ENCODE measurements at regions of chr7 and their contacts with region 1.

Region 1: DNA sequence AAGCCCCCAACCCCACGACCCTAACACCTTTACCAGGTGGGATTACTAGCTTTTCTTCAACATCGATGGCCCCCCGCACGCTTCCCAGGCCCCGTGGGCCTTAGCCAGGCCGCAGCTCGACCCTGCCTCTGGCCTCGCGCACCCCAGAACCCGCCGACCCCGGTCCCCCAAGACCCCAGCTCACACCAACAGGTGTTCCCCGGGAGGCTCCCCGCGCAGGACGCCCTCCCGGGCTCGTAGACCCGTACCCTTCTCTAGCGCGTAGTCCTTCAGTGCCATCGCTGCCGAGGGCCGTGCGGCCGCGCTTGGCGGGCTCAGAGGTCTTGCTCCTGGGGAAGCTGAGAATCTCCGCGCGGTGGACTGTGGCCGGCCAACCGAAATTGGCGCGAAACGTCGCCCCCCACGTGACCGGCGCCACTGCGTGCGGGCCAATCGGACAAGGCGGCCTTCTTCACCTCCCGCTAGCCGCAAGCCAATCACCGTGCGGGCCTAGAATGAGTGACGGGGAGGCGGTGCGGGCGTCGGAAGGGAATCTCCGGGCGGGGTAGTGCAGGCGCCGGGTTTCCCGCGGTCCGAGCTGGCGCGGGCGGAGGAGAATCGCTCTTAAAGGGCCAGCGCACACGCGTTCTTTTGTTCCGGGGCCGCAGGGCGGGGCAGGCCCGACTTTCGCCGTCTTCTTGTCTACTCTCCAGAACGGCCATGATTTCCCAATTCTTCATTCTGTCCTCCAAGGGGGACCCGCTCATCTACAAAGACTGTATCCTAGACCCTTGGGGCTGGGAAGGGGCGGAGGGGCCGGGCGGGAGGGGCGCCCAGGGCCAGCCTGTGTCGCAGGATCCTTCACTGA is at the starts of genes AP4M1 and MCM7:
- DNase-seq: peak; percentile 98 to 100 (median 100)
- H3K4me3 ChIP-seq: peak within 1 kb of the TSS; percentile 61 to 99 (median 83)
- H3K27ac ChIP-seq: peak within 1 kb of the TSS; percentile 73 to 98 (median 94)
- H3K27me3 ChIP-seq: no peaks in the 10 kb centered on the region
- CTCF ChIP-seq: peak in 8 of 56 donors; percentile 9 to 45 (median 16)
- total RNA-seq, gene AP4M1: 11.3 to 28.4 (median 19.5) TPM
- total RNA-seq, gene MCM7: 19.4 to 81.4 (median 38.0) TPM

Region 2: DNA sequence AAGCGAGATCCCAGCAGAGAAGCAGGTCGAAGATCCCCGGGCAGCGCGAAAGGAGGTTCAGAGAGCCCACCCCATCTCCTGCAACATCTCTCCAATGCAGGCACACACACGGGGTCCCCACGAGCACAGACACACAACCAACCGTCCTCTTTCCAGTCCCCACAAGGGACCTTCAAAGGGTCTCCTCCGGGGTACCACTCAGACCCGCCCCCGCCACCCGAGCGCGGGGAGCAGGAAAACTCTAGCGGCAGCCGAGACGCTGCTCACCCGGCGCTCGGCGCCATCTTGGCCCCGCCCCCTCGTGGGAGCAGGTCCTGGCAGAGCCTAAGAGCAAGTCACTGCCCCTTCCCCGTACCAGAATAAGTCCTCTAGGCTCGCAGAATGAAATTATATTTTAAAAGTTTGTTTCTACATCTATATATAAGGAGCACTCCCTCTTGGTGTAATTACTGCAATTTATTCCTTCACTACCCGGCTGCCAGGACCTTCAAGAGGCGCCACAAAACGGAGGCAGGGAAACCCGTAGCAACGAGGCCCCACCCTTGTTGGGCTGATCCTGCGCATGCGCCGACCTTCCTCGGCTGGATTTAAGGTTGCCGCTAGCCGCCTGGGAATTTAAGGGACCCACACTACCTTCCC is 17.9 kb after region 1 on chr7 and contains the starts of genes CNPY4 and TAF6:
- intact Hi-C with region 1: loop called in 1 of 2 experiments (anchors 1 kb)
- DNase-seq: peak; percentile 93 to 97 (median 95)
- H3K4me3 ChIP-seq: peak within 1 kb of the TSS; percentile 60 to 99 (median 86)
- H3K27ac ChIP-seq: peak within 1 kb of the TSS; percentile 85 to 100 (median 97)
- H3K27me3 ChIP-seq: no peaks in the 10 kb centered on the region
- CTCF ChIP-seq: peak in 27 of 56 donors; percentile 6 to 54 (median 22)
- total RNA-seq, gene CNPY4: 9.7 to 27.8 (median 16.8) TPM
- total RNA-seq, gene TAF6: 46.6 to 98.0 (median 72.6) TPM

Region 3: DNA sequence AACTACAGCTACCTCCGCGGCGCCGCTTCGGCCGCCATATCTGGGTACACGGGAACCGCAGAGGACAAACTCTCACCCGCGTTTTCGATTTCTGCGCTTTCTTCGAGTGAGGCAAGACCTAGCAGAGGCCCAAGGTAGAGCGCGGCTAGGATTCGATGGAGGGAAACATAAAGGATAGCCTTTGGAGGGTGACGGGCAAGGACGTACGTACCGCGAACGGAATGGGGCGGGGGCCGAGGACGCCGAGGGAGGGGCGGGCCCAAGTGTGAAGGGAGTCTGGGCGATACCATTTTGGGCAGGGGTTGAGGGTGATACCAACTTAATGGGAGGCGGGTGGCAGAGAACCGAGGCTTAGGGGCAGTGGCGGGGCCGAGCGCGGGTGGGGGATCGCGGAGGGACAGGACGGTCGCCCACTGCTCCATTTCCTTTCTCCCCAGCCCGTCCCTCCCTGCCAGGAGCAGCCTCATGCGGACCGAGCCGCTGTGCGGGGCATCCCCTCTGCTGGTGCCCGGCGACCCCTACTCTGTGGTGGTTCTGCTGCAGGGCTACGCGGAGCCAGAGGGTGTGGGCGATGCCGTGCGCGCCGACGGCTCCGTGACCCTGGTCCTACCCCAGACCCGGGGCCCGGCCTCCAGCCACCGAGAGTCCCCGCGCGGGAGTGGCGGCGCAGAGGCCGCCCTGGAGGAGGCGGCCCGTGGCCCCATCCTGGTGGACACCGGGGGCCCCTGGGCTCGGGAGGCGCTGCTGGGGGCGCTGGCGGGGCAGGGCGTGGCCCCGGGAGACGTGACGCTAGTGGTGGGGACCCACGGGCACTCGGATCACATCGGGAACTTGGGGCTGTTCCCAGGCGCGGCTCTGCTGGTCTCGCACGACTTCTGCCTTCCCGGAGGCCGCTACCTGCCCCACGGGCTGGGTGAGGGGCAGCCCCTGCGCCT is 26.0 kb after region 1 on chr7 and contains the start of gene MBLAC1:
- intact Hi-C with region 1: loop called (anchors 2 kb)
- DNase-seq: peak; percentile 78 to 94 (median 90)
- H3K4me3 ChIP-seq: peak within 1 kb of the TSS; percentile 64 to 98 (median 93)
- H3K27ac ChIP-seq: peak within 1 kb of the TSS; percentile 55 to 99 (median 95)
- H3K27me3 ChIP-seq: no peaks in the 10 kb centered on the region
- CTCF ChIP-seq: peak in 9 of 56 donors; percentile 1 to 27 (median 9)
- total RNA-seq, gene MBLAC1: 5.6 to 16.5 (median 11.0) TPM

Region 4: DNA sequence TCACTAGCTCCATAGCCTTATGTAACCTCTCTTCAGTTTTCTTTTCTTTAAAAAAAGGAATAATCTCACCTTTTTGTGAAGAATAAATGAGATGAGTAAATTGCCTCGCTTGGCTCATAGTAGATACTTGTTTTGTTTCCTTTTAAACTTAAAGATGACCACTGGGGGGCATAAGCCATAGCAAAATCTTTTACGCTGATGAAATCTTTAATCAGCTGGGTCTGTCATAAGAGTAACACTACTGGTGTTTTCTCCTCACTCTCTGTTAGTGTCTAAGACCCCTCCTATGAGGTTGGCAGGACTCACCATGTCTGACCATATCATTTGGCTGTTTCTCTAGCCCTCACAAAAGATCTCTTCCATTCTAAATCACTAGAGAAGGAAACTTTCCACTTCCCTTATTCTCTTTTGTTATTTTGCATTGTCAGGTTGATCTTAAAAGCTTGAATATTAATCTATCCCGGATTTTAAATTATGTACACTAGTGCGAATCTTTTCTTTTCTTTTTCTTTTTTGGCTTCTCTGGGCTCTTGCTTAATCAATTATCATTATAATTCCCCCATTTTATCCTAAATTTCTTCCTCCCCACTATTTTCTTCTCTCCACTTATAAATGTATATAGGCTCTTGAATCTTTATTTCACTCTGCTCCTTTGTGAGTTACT is 88.9 kb after region 1 on chr7:
- intact Hi-C with region 1: no loop called
- DNase-seq: no peak
- H3K4me3 ChIP-seq: no peak overlapping the region
- H3K27ac ChIP-seq: no peak overlapping the region
- H3K27me3 ChIP-seq: no peaks in the 10 kb centered on the region
- CTCF ChIP-seq: peak in 50 of 56 donors; percentile 15 to 66 (median 43)

Region 5: DNA sequence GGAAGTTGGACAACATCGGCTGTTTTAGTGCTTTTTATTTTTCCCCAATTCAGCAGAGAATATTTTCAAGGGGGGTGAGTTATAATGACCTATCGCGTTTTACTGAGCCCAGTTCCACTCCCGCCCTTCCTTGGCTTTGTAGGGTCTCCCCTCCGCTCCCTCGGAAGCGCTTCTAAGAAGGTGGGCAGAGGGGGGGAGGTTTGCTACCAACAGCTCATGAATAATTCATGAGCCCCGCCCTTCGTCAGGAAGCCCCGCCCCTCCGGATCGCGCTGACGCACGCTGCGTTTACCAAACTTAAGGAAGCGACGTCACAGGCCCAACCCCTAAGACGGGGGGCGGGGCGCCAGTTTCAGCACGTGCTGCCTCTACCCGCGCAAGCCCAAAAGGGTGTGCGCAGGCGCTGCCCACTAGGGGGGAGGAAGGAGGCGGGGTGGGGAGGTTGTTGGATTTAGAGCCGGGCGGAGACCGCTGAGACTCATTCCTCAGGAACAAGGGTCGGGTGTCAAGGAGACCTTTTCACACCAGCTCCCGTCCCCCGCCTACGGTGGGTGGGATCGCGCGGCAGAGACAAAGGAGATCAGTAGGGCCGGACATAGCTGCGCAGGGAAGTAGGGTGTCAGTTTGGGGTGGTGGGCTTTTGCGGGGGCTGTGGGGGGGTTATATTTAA is 327.9 kb after region 1 on chr7:
- intact Hi-C with region 1: loop called in 1 of 2 experiments (anchors 10 kb)
- DNase-seq: peak; percentile 99 to 100 (median 100)
- H3K4me3 ChIP-seq: peak overlapping the region; percentile 67 to 99 (median 88)
- H3K27ac ChIP-seq: peak overlapping the region; percentile 98 to 100 (median 100)
- H3K27me3 ChIP-seq: no peaks in the 10 kb centered on the region
- CTCF ChIP-seq: peak in 7 of 56 donors; percentile 4 to 21 (median 9)